HCT116 (cell line): ENCODE measurements at regions of chr5 and their contacts with region 1.

Region 1: DNA sequence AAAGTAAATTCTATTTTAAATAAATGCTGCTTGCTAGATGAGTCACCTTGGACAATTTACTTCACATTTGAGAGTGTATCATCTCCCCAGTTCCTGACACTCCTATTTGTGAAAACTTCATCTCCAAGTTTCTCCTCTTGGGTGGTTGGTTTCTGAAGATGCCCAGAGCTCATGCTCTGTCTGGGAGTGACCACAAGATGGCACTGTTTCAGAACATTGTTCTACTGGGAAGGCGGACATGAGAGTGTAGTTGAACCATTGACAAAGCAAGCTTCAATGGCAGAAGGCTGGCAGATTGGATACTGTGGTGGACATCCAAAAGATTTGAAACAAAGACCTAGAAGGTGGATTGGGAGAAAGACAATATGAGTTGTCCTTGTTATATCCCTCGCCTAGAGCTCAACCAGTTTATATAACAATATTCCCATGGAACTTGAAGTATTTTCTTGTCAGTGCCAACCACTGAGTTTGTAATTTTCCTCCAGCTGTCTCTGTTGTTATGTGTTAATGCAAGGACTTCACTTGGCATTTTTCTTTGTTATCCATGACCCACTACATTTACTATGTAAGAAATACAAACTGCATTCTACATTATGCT is 234.3 kb upstream of the ANKH start:
- DNase-seq: peak; percentile 22
- ATAC-seq: peak; percentile 80
- H3K4me3 ChIP-seq: no peak overlapping the region
- H3K27ac ChIP-seq: no peak overlapping the region
- H3K4me1 ChIP-seq: no peaks in the 10 kb centered on the region
- H3K27me3 ChIP-seq: no peaks in the 10 kb centered on the region
- CTCF ChIP-seq: peak; percentile 16 to 79 (median 75); a peak in 5 of 6 replicates
- POLR2A ChIP-seq: no peak
- RAD21 ChIP-seq: peak; percentile 47

Region 2: DNA sequence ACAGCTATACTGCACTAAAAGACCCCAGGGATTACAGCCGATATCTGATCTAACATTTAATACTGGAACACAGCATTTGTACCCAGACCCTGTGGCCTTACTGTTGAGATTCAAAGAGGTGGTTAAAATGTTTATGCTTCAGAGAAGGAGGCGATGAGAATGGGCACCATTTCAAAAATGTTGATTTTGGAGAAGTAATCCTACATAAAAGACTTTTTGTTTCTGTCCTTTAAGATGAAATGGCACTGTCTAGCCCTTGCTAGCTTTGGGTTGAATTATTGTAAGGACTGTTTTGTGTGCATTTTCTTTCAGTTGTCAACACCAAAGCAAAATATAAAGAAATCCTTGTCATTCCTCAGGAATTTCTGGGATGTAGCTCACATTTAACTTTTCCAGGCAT is 54.2 kb after region 1 on chr5:
- CTCF ChIA-PET with region 1: no interaction called
- POLR2A ChIA-PET with region 1: no interaction called
- RAD21 ChIA-PET with region 1: no interaction called
- intact Hi-C with region 1: no loop called
- DNase-seq: no peak
- ATAC-seq: no peak
- H3K4me3 ChIP-seq: no peak overlapping the region
- H3K27ac ChIP-seq: no peak overlapping the region
- H3K4me1 ChIP-seq: no peaks in the 10 kb centered on the region
- H3K27me3 ChIP-seq: no peaks in the 10 kb centered on the region
- CTCF ChIP-seq: no peak
- POLR2A ChIP-seq: no peak
- RAD21 ChIP-seq: no peak

Region 3: GRCh38 chr5:15821506-15821905 is 715.6 kb after region 1 on chr5:
- CTCF ChIA-PET with region 1: no interaction called
- POLR2A ChIA-PET with region 1: no interaction called
- RAD21 ChIA-PET with region 1: no interaction called
- intact Hi-C with region 1: loop called (anchors 5 kb)
- DNase-seq: no peak
- ATAC-seq: no peak
- H3K4me3 ChIP-seq: no peak overlapping the region
- H3K27ac ChIP-seq: no peak overlapping the region
- H3K4me1 ChIP-seq: no peaks in the 10 kb centered on the region
- H3K27me3 ChIP-seq: no peaks in the 10 kb centered on the region
- CTCF ChIP-seq: no peak
- POLR2A ChIP-seq: no peak
- RAD21 ChIP-seq: no peak

Region 4: DNA sequence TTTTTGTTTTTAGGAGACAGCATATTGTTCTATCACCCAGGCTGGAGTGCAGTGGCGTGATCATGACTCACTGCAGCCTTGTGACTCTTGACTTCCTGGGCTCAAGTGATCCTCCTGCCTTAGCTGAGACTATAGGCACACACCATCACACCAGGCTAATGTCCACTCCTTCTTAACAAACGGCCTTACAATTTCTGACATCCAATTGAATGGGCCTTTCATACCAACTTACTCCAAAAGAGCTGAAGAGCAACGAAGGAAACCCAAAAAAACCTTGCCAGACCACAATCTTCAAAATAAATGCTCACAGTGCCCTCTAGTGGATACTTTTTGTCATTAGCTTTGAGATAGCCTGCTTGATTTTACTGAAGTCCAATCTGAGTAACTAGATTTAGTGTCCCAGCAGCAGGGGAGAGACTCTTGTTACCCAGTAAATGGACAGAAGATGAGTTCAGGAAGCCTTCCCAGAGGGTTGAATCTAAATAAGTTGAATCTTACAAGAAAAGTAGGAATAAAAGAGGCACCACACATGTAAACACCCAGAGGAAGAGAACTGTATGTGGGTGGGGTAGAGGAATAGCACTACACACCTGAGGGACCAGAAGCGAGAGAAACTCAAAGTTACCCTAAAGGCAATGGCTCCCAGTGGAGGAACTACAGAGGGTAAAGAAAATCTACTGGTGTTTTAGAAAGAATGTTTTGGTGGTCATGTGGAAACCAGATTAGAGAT is 1350.4 kb after region 1 on chr5:
- CTCF ChIA-PET with region 1: interaction called, 7 read pairs
- POLR2A ChIA-PET with region 1: no interaction called
- RAD21 ChIA-PET with region 1: no interaction called
- intact Hi-C with region 1: loop called (anchors 5 kb)
- DNase-seq: peak; percentile 49
- ATAC-seq: peak; percentile 82
- H3K4me3 ChIP-seq: no peak overlapping the region
- H3K27ac ChIP-seq: no peak overlapping the region
- H3K4me1 ChIP-seq: no peaks in the 10 kb centered on the region
- H3K27me3 ChIP-seq: no peaks in the 10 kb centered on the region
- CTCF ChIP-seq: peak; percentile 32 to 84 (median 54); a peak in 5 of 6 replicates
- POLR2A ChIP-seq: no peak
- RAD21 ChIP-seq: peak; percentile 47